ENCODE measurements at regions of chr17 and their contacts with region 1.

Region 1: GRCh38 chr17:79617740-79618382 is 7.0 kb upstream of the RBFOX3 start:
- DNase-seq: no peak
- ATAC-seq: no peak
- H3K4me3 ChIP-seq: no peak overlapping the region
- H3K27ac ChIP-seq: no peak overlapping the region
- H3K4me1 ChIP-seq: no peaks in the 10 kb centered on the region
- H3K27me3 ChIP-seq: peaks cover 21 to 83% of the 10 kb centered on the region in 2 experiments
- CTCF ChIP-seq: no peak
- EP300 ChIP-seq: no peak
- POLR2A ChIP-seq: no peak
- RAD21 ChIP-seq: no peak

Region 2: GRCh38 chr17:79573196-79573896 is 44.5 kb before region 1 on chr17:
- CTCF ChIA-PET with region 1: no interaction called
- POLR2A ChIA-PET with region 1: no interaction called
- in situ Hi-C with region 1: no loop called
- intact Hi-C with region 1: loop called (anchors 2 kb)
- DNase-seq: no peak
- ATAC-seq: no peak; the same call in 2 of the 3 replicates
- H3K4me3 ChIP-seq: no peak overlapping the region
- H3K27ac ChIP-seq: no peak overlapping the region
- H3K4me1 ChIP-seq: no peaks in the 10 kb centered on the region
- H3K27me3 ChIP-seq: peaks cover 9 to 57% of the 10 kb centered on the region in 2 experiments
- CTCF ChIP-seq: no peak
- EP300 ChIP-seq: no peak
- POLR2A ChIP-seq: no peak
- RAD21 ChIP-seq: no peak

Measured in HepG2 (cell line).